ENCODE measurements at regions of chr21 and their contacts with region 1.

Region 1: GRCh38 chr21:15445327-15445726 is 284.5 kb upstream of the USP25 start:
- DNase-seq: no peak
- ATAC-seq: no peak
- H3K4me3 ChIP-seq: no peak overlapping the region
- H3K27ac ChIP-seq: peak overlapping the region; percentile 93
- H3K4me1 ChIP-seq: peaks cover 61% of the 10 kb centered on the region
- H3K27me3 ChIP-seq: no peaks in the 10 kb centered on the region
- CTCF ChIP-seq: no peak
- EP300 ChIP-seq: no peak
- POLR2A ChIP-seq: no peak
- RAD21 ChIP-seq: no peak

Region 2: GRCh38 chr21:14382835-14383594 is 1062.3 kb before region 1 on chr21 and contains the start of gene HSPA13:
- CTCF ChIA-PET with region 1: no interaction called
- POLR2A ChIA-PET with region 1: no interaction called
- in situ Hi-C with region 1: no loop called
- intact Hi-C with region 1: loop called (anchors 10 kb)
- DNase-seq: peak; percentile 99
- ATAC-seq: peak; percentile 98
- H3K4me3 ChIP-seq: peak within 1 kb of the TSS; percentile 90 to 97 (median 90)
- H3K27ac ChIP-seq: peak within 1 kb of the TSS; percentile 68
- H3K4me1 ChIP-seq: peaks cover 29% of the 10 kb centered on the region
- H3K27me3 ChIP-seq: no peaks in the 10 kb centered on the region; a peak in 1 of 5 replicates
- CTCF ChIP-seq: no peak
- EP300 ChIP-seq: 0 out of 4 replicates have a peak, but pooled peaks of 1 of the 2 experiments have one; percentile 16
- POLR2A ChIP-seq: peak; percentile 65 to 70
- RAD21 ChIP-seq: 0 out of 2 replicates have a peak, but pooled peaks have one; percentile 16
- total RNA-seq, gene HSPA13: 20.5 and 28.4 TPM in 2 replicates

Region 3: DNA sequence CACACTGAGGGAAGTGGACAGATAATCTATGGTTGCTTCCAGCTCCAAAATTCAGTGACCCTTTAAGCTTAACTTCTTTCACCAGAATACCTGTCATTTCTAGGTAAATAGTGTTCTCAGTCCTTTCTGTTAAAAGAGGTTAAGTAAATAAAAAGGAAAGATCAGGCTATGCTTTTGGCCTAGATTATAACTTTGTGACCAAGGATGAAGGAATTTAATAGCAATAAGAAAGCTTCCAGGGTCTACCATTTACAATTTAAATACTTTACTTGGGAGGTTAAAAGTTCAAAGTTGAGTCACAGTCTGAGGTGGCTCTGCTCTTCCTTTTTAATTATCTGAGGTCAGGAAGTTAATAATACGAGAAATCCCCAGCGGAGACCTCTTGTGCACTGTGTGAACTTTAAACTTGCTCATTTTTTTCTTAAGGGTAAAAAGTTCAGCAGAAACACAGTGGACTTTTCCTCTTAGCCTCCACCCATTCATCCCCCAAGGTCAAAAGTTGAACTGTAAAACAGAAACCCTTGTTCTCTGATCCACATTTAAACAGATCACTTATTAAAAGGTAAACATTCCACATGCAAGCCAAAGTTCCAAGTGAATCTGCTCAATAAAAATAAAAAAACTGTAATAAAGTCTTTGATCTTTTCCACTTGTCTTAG is 567.6 kb before region 1 on chr21:
- CTCF ChIA-PET with region 1: no interaction called
- POLR2A ChIA-PET with region 1: no interaction called
- in situ Hi-C with region 1: no loop called
- intact Hi-C with region 1: loop called (anchors 5 kb)
- DNase-seq: peak; percentile 96
- ATAC-seq: peak; percentile 70
- H3K4me3 ChIP-seq: peak overlapping the region in 1 of 3 experiments; percentile 15; a peak in 1 of 6 replicates
- H3K27ac ChIP-seq: peak overlapping the region; percentile 96
- H3K4me1 ChIP-seq: peaks cover 77% of the 10 kb centered on the region
- H3K27me3 ChIP-seq: no peaks in the 10 kb centered on the region
- CTCF ChIP-seq: no peak
- EP300 ChIP-seq: peak; percentile 54 to 96
- POLR2A ChIP-seq: no peak
- RAD21 ChIP-seq: no peak

Region 4: GRCh38 chr21:15210235-15210739 is 235.0 kb before region 1 on chr21:
- CTCF ChIA-PET with region 1: no interaction called
- POLR2A ChIA-PET with region 1: no interaction called
- in situ Hi-C with region 1: no loop called
- intact Hi-C with region 1: loop called (anchors 1 kb)
- DNase-seq: peak; percentile 92
- ATAC-seq: peak; percentile 95
- H3K4me3 ChIP-seq: peak overlapping the region in 2 of 3 experiments; percentile 35 to 46; a peak in 3 of 6 replicates
- H3K27ac ChIP-seq: peak overlapping the region; percentile 91
- H3K4me1 ChIP-seq: peaks cover 78% of the 10 kb centered on the region
- H3K27me3 ChIP-seq: no peaks in the 10 kb centered on the region
- CTCF ChIP-seq: peak; percentile 78
- EP300 ChIP-seq: peak; percentile 54 to 94; a peak in 3 of 4 replicates
- POLR2A ChIP-seq: peak; percentile 34 to 38; a peak in 2 of 4 replicates
- RAD21 ChIP-seq: peak; percentile 56; the same call in 1 of the 2 replicates

Region 5: DNA sequence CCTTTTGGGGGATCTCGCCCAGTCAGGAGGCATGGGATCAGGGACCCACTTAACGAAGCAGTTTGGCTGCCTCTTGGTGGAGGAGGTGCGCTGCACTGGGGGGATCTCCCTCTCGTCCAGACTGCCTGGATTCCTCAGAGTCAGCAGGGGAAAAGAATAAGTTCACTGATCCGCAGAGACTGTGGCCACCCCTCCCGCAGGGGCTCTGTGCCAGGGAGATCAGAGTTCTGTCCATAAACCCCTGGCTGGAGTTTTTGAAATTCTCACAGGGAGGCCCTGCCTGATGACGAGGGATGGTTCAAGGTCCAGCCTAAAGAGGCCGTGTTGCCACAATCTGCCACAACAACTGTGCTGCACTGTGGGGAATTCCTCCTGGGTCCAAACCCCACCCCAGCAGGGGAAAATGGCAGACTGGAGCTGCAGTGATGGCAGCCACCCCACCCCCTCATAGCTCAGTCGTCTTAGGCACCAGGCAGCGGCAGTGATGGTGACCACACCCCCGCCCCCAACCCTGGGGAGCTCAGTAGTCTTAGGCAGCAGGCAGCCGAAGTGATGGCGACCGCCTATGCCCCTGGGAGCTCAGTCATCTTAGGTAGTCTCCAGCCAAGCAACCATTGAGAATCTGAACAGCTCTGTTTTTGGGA is 10.6 kb after region 1 on chr21:
- CTCF ChIA-PET with region 1: no interaction called
- POLR2A ChIA-PET with region 1: interaction called, 10 read pairs
- in situ Hi-C with region 1: no loop called
- intact Hi-C with region 1: no loop called
- DNase-seq: peak; percentile 91
- ATAC-seq: peak; percentile 99
- H3K4me3 ChIP-seq: peak overlapping the region in 2 of 3 experiments; percentile 39 to 59; a peak in 4 of 6 replicates
- H3K27ac ChIP-seq: peak overlapping the region; percentile 90
- H3K4me1 ChIP-seq: peaks cover 44% of the 10 kb centered on the region
- H3K27me3 ChIP-seq: no peaks in the 10 kb centered on the region
- CTCF ChIP-seq: no peak
- EP300 ChIP-seq: peak; percentile 61 to 80; a peak in 3 of 4 replicates
- POLR2A ChIP-seq: peak; percentile 32 to 46; a peak in 2 of 4 replicates
- RAD21 ChIP-seq: no peak

Region 6: DNA sequence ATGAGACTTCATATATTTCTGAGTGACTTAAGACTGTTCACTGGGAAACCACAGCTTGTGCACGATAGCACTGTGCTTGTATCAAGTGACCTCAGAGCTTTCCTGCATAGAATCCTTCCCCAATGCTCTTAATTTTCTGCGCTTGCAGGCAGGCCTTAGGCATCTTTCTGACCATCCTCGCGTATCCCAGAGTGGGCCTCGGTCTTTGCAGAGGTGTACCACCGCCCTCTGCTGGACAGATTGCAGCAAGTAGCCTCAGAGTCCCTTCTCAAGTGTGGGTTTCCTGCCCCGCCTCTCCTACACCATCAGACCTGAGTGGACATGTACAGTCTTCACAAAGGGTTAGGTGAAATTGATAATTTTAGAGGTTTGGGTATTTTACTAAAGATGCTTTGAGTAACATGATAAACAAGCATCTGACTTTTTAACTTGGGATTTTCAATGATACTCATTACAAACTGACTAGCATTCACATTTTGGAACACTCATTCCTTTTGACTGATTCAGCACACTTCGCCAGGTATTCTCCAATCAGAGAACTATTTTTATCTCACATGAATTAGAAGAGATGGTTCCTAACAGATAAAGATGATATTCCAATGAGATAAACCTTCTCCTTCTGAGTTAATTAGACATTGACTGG is 37.9 kb after region 1 on chr21:
- CTCF ChIA-PET with region 1: no interaction called
- POLR2A ChIA-PET with region 1: no interaction called
- in situ Hi-C with region 1: no loop called
- intact Hi-C with region 1: loop called (anchors 2 kb)
- DNase-seq: peak; percentile 82
- ATAC-seq: peak; percentile 100
- H3K4me3 ChIP-seq: no peak overlapping the region
- H3K27ac ChIP-seq: no peak overlapping the region
- H3K4me1 ChIP-seq: peaks cover 25% of the 10 kb centered on the region
- H3K27me3 ChIP-seq: no peaks in the 10 kb centered on the region
- CTCF ChIP-seq: peak; percentile 97
- EP300 ChIP-seq: no peak
- POLR2A ChIP-seq: no peak
- RAD21 ChIP-seq: peak; percentile 96